ENCODE measurements at regions of chr2 and their contacts with region 1.

Region 1: DNA sequence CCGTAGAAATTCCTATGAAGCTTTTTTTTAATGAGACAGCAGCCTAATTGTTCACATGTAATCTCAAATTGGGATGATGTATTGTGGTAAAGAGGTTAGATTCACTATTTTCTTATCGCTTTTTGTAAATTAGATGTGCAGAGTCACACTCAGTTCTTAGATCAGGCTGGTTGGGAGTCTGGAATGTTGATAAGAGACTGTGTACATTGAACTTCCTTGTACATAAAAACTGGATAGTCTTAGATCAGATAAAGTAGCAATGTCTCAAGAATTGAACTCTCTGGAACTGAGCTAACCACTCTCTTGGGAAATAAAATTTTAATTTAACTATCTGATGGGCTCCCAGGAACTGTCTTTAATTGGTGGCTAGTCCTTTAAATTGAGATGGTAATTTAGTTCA is 108.1 kb upstream of the MSTN start:
- DNase-seq: no peak
- H3K4me3 ChIP-seq: no peak overlapping the region
- H3K27ac ChIP-seq: no peak overlapping the region
- H3K4me1 ChIP-seq: no peaks in the 10 kb centered on the region
- H3K27me3 ChIP-seq: no peaks in the 10 kb centered on the region
- CTCF ChIP-seq: no peak
- EP300 ChIP-seq: no peak
- POLR2A ChIP-seq: no peak

Region 2: GRCh38 chr2:190105554-190105953 is 65.1 kb before region 1 on chr2:
- intact Hi-C with region 1: loop called in 1 of 4 experiments (anchors 2 kb)
- DNase-seq: no peak
- H3K4me3 ChIP-seq: no peak overlapping the region
- H3K27ac ChIP-seq: no peak overlapping the region
- H3K4me1 ChIP-seq: no peaks in the 10 kb centered on the region
- H3K27me3 ChIP-seq: no peaks in the 10 kb centered on the region
- CTCF ChIP-seq: no peak
- EP300 ChIP-seq: no peak
- POLR2A ChIP-seq: no peak